Heart right ventricle (tissue), 16 donors: ENCODE measurements at regions of chr17 and their contacts with region 1.

Region 1: GRCh38 chr17:66165513-66166123 is 26.3 kb downstream of the CEP112 start:
- DNase-seq: no peak
- ATAC-seq: no peak
- H3K4me3 ChIP-seq: no peak overlapping the region
- H3K27ac ChIP-seq: no peak overlapping the region
- H3K4me1 ChIP-seq: peaks cover 0 to 8% (median 0%) of the 10 kb centered on the region in 9 donors
- H3K27me3 ChIP-seq: no peaks in the 10 kb centered on the region
- CTCF ChIP-seq: peak; percentile 53 to 81 (median 74)

Region 2: DNA sequence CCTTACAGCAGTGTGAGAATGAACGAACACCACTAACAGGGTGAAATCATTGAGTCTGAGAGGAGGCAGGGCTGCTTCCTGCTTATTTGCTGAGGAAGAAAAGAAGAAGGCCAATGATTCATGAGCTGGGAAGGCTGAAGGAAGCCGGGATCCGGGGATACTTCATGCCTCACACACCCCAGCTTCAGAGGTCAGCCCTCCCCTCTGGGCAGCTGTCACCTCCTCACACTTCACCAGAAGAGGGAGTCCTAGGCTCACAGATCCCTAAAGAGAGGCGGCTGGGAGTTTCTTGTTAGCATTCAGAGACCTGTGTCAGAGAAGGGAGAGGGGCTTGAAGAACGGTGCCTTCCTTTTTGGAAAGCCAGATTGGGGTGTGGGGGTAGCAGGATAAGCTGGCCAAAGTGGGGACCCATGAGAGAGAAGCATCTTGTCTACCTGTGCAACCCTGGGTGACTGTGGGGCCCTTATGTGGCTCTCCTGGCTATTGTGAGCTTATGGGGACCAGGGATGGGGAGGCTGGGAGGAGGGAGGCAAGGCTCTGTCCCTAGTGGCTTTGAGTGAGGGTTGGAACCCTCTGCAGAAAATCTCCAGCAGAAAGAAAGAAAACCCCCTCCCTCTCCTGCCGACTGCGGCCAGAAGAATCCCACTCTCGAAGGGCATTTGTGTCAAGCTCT is 933.8 kb before region 1 on chr17:
- intact Hi-C with region 1: loop called in 9 of 10 experiments (anchors 2 to 10 kb)
- DNase-seq: peak in 1 of 2 donors; percentile 40
- ATAC-seq: peak; percentile 52 to 84 (median 78)
- H3K4me3 ChIP-seq: no peak overlapping the region
- H3K27ac ChIP-seq: no peak overlapping the region
- H3K4me1 ChIP-seq: peaks cover 0 to 13% (median 0%) of the 10 kb centered on the region in 9 donors
- H3K27me3 ChIP-seq: peaks cover 0 to 17% (median 13%) of the 10 kb centered on the region in 7 donors
- CTCF ChIP-seq: peak; percentile 14 to 71 (median 63)

Region 3: DNA sequence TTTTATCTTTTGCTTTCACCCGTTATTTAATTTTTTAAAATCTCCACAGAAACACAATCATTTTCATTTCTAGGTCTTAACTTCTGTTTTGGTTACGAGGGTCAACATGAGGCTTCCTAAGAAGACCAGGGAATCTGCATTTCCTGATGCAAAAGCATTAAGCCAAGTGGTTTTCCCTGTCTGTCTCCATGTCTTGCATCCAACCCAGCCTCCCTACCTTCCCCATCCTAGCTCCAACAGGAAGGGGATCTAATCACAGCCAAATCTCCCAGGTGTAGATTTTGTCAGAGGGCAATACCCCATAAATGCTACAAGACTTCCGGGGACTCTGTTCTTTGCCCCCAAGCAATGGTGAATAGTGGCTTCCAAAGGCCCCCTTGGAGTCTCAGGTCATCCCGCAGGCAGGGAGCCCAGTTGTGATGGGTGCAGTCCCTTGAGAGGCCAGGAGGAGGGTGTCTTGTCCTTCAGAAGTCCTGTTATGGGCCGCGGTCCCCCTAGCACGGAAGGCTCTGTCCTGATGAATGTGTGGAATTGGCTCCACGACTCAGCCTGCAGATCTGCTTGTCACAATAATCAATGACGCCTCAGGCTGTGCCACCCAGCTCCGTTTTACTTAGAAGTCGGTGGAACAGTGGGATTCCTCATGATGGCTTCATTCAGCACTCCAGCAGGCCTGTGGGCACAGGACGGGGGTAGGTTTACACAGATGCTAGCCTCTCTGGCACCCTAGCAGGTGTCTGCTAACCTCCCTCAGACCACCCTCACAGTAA is 887.4 kb before region 1 on chr17:
- intact Hi-C with region 1: loop called in 1 of 10 experiments (anchors 5 kb)
- DNase-seq: peak; percentile 16 to 18
- ATAC-seq: peak in 3 of 8 donors; percentile 63 to 69 (median 64)
- H3K4me3 ChIP-seq: no peak overlapping the region
- H3K27ac ChIP-seq: no peak overlapping the region
- H3K4me1 ChIP-seq: peaks cover 0 to 3% (median 0%) of the 10 kb centered on the region in 9 donors
- H3K27me3 ChIP-seq: peaks cover 0 to 37% (median 0%) of the 10 kb centered on the region in 7 donors
- CTCF ChIP-seq: peak in 7 of 9 donors; percentile 25 to 50 (median 44)

Region 4: GRCh38 chr17:65294179-65294720 is 871.4 kb before region 1 on chr17:
- intact Hi-C with region 1: loop called in 9 of 10 experiments (anchors 5 to 10 kb)
- DNase-seq: peak; percentile 28 to 30
- ATAC-seq: peak; percentile 71 to 92 (median 82)
- H3K4me3 ChIP-seq: no peak overlapping the region
- H3K27ac ChIP-seq: no peak overlapping the region
- H3K4me1 ChIP-seq: peaks cover 0 to 6% (median 0%) of the 10 kb centered on the region in 9 donors
- H3K27me3 ChIP-seq: peaks cover 0 to 5% (median 0%) of the 10 kb centered on the region in 7 donors
- CTCF ChIP-seq: peak; percentile 29 to 81 (median 73)

Region 5: DNA sequence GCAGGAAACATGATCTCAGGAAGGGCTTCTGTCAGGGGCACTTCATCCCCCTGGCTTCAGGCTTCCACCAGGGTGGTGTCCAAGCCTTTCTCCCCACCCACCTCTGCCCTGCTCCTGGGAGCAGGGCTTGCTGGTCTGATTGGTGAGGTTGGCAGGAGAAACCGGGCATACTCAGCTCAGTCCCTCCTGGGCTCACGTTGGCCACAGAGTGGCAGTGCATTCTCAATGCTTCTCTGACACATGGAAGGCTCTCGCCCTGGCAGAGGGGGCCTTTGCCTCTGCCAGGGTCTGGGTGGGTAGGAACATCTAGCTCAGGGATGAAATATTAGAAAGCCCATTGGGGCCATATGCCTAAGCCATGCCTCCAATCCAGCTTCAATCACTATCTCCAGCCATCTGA is 747.0 kb before region 1 on chr17:
- intact Hi-C with region 1: loop called in 2 of 10 experiments (anchors 5 to 10 kb)
- DNase-seq: peak in 1 of 2 donors; percentile 9
- ATAC-seq: peak in 4 of 8 donors; percentile 47 to 83 (median 60)
- H3K4me3 ChIP-seq: no peak overlapping the region
- H3K27ac ChIP-seq: no peak overlapping the region
- H3K4me1 ChIP-seq: no peaks in the 10 kb centered on the region
- H3K27me3 ChIP-seq: no peaks in the 10 kb centered on the region
- CTCF ChIP-seq: peak in 7 of 9 donors; percentile 11 to 46 (median 26)

Region 6: GRCh38 chr17:65455972-65456343 is 709.7 kb before region 1 on chr17:
- intact Hi-C with region 1: loop called in 1 of 10 experiments (anchors 10 kb)
- DNase-seq: peak in 1 of 2 donors; percentile 21
- ATAC-seq: peak; percentile 72 to 95 (median 84)
- H3K4me3 ChIP-seq: peak overlapping the region in 1 of 10 donors; percentile 13
- H3K27ac ChIP-seq: peak overlapping the region in 7 of 10 donors; percentile 23 to 78 (median 52)
- H3K4me1 ChIP-seq: peaks cover 0 to 14% (median 4%) of the 10 kb centered on the region in 9 donors
- H3K27me3 ChIP-seq: peaks cover 0 to 3% (median 0%) of the 10 kb centered on the region in 7 donors
- CTCF ChIP-seq: peak in 8 of 9 donors; percentile 8 to 61 (median 44)

Region 7: GRCh38 chr17:65556014-65556909 is 609.4 kb before region 1 on chr17:
- intact Hi-C with region 1: loop called in 3 of 10 experiments (anchors 10 kb)
- DNase-seq: peak; percentile 77 to 80
- ATAC-seq: peak in 6 of 8 donors; percentile 14 to 39 (median 28)
- H3K4me3 ChIP-seq: peak overlapping the region in 3 of 10 donors; percentile 8 to 16 (median 16)
- H3K27ac ChIP-seq: peak overlapping the region in 2 of 10 donors; percentile 48 to 68
- H3K4me1 ChIP-seq: peaks cover 0 to 43% (median 18%) of the 10 kb centered on the region in 9 donors
- H3K27me3 ChIP-seq: peaks cover 0 to 39% (median 0%) of the 10 kb centered on the region in 7 donors
- CTCF ChIP-seq: peak; percentile 50 to 83 (median 72)

Region 8: GRCh38 chr17:66228887-66229782 is 63.5 kb after region 1 on chr17 and contains the start of gene APOH:
- intact Hi-C with region 1: no loop called
- DNase-seq: no peak
- ATAC-seq: no peak
- H3K4me3 ChIP-seq: no peak within 1 kb of the TSS
- H3K27ac ChIP-seq: no peak within 1 kb of the TSS
- H3K4me1 ChIP-seq: no peaks in the 10 kb centered on the region
- H3K27me3 ChIP-seq: peaks cover 0 to 2% (median 0%) of the 10 kb centered on the region in 7 donors
- CTCF ChIP-seq: no peak
- total RNA-seq, gene APOH: 0.57 TPM in 1 of 10 donors, not detected in the others